CD14-positive monocyte (primary cell): ENCODE measurements at regions of chr17 and their contacts with region 1.

Region 1: DNA sequence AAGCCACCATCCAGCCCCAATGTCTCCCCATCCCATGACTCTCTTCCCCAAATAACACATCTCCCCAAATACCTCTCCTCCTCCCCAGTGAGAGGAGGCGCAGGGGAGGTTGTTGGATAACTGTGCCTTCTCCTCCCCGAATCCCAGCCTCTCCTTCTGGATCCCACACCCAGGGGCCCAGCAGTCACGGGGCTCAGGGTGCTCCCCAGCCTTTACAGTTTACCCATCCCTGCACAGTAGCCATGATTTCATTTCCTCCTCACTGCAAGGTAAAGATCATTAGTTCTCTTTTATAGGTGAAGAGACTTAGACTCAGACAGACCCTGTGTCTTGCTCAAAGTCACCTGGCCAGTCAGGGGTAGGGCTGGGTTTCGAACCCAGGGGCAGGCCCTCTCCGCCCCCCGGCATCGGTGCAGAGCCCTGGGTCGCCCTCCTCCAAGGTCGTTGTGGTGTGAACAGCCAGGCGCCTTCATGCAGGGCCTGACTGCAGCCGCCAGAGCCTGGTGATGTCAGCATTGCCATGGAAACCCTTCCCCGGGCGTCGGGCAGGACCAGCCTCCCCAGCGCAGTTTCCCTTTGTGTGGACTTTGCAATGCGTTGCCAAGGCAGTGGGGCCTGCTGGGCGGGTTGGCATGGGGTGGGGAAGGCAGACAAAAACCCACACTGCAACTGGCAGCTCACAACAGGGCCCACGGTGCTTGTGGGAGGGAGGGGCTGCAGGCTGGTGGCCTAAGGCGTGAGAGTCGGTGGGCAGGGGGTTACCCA is 53.3 kb upstream of the TOB1 start:
- DNase-seq: peak; percentile 91 to 94 (median 92)
- H3K4me3 ChIP-seq: peak overlapping the region in 1 of 3 experiments; percentile 21
- H3K4me3 Mint-ChIP-seq: peak overlapping the region; percentile 39 to 52
- H3K27ac ChIP-seq: peak overlapping the region; percentile 74 to 75
- H3K27ac Mint-ChIP-seq: peak overlapping the region; percentile 96 to 99 (median 98)
- H3K4me1 ChIP-seq: peaks cover 45 to 51% of the 10 kb centered on the region in 2 donors
- H3K4me1 Mint-ChIP-seq: peaks cover 58% of the 10 kb centered on the region
- H3K27me3 ChIP-seq: no peaks in the 10 kb centered on the region
- H3K27me3 Mint-ChIP-seq: peaks cover 0 to 2% (median 0%) of the 10 kb centered on the region in 3 donors
- CTCF ChIP-seq: no peak

Region 2: GRCh38 chr17:50596191-50597037 is 323.1 kb before region 1 on chr17:
- intact Hi-C with region 1: no loop called
- DNase-seq: no peak
- H3K4me3 ChIP-seq: no peak overlapping the region
- H3K4me3 Mint-ChIP-seq: no peak overlapping the region
- H3K27ac ChIP-seq: no peak overlapping the region
- H3K27ac Mint-ChIP-seq: peak overlapping the region in 1 of 7 donors; percentile 37
- H3K4me1 ChIP-seq: peaks cover 11 to 14% of the 10 kb centered on the region in 2 donors
- H3K4me1 Mint-ChIP-seq: peaks cover 11% of the 10 kb centered on the region
- H3K27me3 ChIP-seq: no peaks in the 10 kb centered on the region
- H3K27me3 Mint-ChIP-seq: peaks cover 6 to 12% (median 9%) of the 10 kb centered on the region in 3 donors
- CTCF ChIP-seq: peak; percentile 33

Region 3: GRCh38 chr17:50931144-50931908 is 11.8 kb after region 1 on chr17:
- intact Hi-C with region 1: loop called in 1 of 2 experiments (anchors 2 kb)
- DNase-seq: peak; percentile 74 to 83 (median 76)
- H3K4me3 ChIP-seq: peak overlapping the region; percentile 13 to 67 (median 17)
- H3K4me3 Mint-ChIP-seq: peak overlapping the region; percentile 70 to 87
- H3K27ac ChIP-seq: peak overlapping the region; percentile 76 to 86
- H3K27ac Mint-ChIP-seq: peak overlapping the region; percentile 91 to 97 (median 96)
- H3K4me1 ChIP-seq: peaks cover 79 to 87% of the 10 kb centered on the region in 2 donors
- H3K4me1 Mint-ChIP-seq: peaks cover 84% of the 10 kb centered on the region
- H3K27me3 ChIP-seq: no peaks in the 10 kb centered on the region
- H3K27me3 Mint-ChIP-seq: peaks cover 0 to 6% (median 3%) of the 10 kb centered on the region in 3 donors
- CTCF ChIP-seq: no peak

Region 4: DNA sequence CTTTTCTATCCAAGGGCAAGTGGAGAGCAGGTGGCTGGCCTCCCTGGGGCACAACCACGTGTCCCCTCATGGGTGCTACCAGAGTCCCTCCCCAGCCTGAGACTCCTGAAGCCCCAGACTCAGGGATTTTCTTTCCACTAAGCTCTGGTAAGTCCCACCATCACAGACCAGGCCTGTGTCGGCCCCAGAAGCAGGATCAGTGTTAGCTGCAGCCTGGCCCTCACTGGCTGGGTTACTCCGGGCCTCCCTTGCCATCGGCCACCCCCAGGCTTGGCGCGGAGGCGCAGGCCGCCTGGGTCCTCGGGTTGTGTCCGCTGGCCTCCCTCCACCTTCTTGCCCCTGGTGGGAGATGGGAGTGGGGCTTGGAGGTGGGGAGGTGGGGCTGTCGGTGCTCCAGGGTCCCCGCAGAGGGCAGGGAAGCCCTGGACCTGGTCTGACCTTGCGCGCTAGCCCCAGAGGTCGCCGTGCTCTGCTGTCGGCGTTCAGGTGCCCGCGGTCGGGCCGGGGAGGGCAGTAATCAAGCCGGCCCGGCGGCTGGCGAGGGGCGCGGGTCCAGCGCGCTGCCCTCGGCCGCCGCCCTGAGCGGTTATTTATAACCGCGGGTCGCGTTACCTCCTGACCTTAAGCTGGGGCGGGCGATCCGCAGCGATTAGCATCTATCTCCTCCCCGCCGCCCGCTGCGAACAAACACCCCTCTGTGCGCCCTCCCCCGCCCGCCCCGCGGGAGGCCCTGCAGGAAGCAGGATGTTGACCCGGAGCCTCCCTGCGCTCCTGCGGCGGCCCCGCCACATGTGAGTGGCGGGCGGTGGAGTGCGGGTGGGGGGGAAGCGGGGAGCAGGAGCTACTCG is 24.8 kb after region 1 on chr17:
- intact Hi-C with region 1: no loop called
- DNase-seq: peak; percentile 27 to 50 (median 38)
- H3K4me3 ChIP-seq: peak overlapping the region; percentile 2 to 68 (median 36)
- H3K4me3 Mint-ChIP-seq: peak overlapping the region; percentile 59 to 61
- H3K27ac ChIP-seq: no peak overlapping the region
- H3K27ac Mint-ChIP-seq: peak overlapping the region in 2 of 7 donors; percentile 30 to 61
- H3K4me1 ChIP-seq: peaks cover 30 to 40% of the 10 kb centered on the region in 2 donors
- H3K4me1 Mint-ChIP-seq: peaks cover 26% of the 10 kb centered on the region
- H3K27me3 ChIP-seq: no peaks in the 10 kb centered on the region
- H3K27me3 Mint-ChIP-seq: peaks cover 2 to 7% (median 6%) of the 10 kb centered on the region in 3 donors
- CTCF ChIP-seq: no peak